Activated B cell treated with CpG ODN at 0.5 μM for 24 hours (primary cell): ENCODE measurements at regions of chr15 and their contacts with region 1.

Region 1: GRCh38 chr15:94163999-94164807 is 67.2 kb upstream of the MCTP2 start:
- DNase-seq: no peak
- ATAC-seq: no peak
- H3K4me3 Mint-ChIP-seq: no peak overlapping the region
- H3K27ac Mint-ChIP-seq: no peak overlapping the region
- H3K4me1 Mint-ChIP-seq: peaks cover 2% of the 10 kb centered on the region
- H3K27me3 Mint-ChIP-seq: no peaks in the 10 kb centered on the region
- CTCF ChIP-seq: peak; percentile 73

Region 2: DNA sequence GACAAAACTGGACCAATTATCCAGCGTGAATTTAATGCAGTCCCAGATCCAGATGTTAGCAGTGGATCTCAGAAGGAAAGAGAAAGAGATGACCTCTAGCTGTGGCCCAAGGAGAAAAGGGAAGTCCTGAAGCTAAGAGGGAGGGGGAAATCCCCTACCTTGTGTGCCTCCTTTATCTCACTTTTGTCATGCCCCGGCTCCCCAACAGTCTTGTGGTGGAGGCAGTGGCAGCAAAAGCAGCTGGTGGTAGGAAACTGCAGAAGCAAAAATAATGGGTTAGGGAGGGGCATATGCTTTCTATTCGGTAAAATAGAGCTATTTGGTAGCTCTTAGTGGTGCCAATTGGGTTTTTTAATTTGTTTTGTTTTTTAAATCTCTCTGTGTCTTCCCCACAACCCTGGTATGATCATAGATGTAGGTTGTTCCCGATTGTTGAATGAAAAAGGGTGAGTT is 123.6 kb after region 1 on chr15:
- CTCF ChIA-PET with region 1: interaction called, 24 read pairs
- POLR2A ChIA-PET with region 1: interaction called, 5 read pairs
- intact Hi-C with region 1: no loop called
- DNase-seq: peak; percentile 41
- ATAC-seq: peak; percentile 92
- H3K4me3 Mint-ChIP-seq: peak overlapping the region; percentile 80
- H3K27ac Mint-ChIP-seq: peak overlapping the region; percentile 92
- H3K4me1 Mint-ChIP-seq: peaks cover 89% of the 10 kb centered on the region
- H3K27me3 Mint-ChIP-seq: no peaks in the 10 kb centered on the region
- CTCF ChIP-seq: no peak

Region 3: DNA sequence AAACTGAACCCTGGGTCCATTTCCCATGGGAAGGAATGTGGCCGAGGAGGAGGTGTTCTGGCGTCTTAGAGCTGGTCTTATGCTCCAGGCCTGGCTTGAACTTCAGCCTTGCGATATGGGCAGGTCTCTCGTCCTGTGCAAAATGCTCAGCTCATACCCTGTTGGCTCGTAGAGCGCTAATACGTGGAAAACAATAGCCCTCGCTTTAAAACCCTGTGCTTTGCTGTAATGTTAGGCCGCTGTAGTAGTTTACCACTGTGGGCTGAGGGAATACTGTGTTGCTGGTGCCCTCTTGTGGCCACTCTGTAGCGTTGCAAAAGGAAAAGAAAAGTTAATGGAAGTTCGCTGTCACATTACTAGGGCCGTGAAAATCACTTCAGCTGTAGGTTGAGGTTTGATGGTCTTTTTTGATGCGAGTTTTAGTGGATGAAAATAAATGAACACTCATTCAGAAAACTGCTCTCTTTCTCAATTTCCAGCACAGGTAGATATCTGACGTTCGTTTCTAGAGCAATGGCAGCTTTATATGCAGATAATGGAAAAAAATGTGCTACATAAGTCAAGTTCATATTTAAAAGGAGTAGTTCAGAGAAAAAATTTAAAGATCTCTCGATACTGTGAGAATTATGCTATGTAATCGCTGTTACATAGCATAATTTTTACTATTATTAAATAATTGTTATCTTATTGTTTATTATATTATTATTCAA is 160.1 kb after region 1 on chr15:
- CTCF ChIA-PET with region 1: interaction called, 348 read pairs
- POLR2A ChIA-PET with region 1: interaction called, 22 read pairs
- intact Hi-C with region 1: loop called (anchors 1 kb)
- DNase-seq: peak; percentile 44
- ATAC-seq: peak; percentile 92
- H3K4me3 Mint-ChIP-seq: no peak overlapping the region
- H3K27ac Mint-ChIP-seq: peak overlapping the region; percentile 25
- H3K4me1 Mint-ChIP-seq: peaks cover 19% of the 10 kb centered on the region
- H3K27me3 Mint-ChIP-seq: no peaks in the 10 kb centered on the region
- CTCF ChIP-seq: peak; percentile 75

Region 4: DNA sequence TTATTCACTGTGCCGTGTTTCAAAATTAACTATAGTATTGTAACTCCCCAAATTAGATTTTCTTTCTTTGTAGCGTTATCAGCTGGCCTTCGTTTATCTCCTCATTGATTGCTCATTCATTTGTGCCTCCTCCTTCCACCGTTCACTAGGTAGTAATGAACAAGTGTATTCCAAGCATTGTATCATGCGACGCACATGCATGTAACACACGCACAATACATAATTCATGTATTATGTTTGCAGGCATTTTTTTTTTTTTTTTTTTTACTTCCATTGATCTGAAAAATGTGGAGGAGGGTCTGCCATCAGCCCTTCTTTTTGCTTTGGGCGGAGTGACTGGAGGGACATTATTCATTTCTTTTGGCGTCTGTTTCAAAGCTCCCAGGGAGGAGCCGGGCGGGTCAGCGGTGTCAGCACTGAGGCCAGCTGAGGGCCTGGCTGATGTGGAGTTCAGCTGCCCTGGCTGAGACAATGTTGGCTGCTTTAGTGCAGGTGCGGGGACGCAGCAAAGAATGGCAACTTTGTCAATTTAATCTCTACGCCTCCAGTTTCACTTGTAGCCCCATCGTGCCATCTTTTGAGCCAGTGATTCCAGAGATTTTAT is 174.1 kb after region 1 on chr15:
- CTCF ChIA-PET with region 1: interaction called, 21 read pairs
- POLR2A ChIA-PET with region 1: no interaction called
- intact Hi-C with region 1: no loop called
- DNase-seq: no peak
- ATAC-seq: no peak
- H3K4me3 Mint-ChIP-seq: no peak overlapping the region
- H3K27ac Mint-ChIP-seq: no peak overlapping the region
- H3K4me1 Mint-ChIP-seq: no peaks in the 10 kb centered on the region
- H3K27me3 Mint-ChIP-seq: no peaks in the 10 kb centered on the region
- CTCF ChIP-seq: no peak